Spleen (tissue), 13 donors: ENCODE measurements at regions of chr3 and their contacts with region 1.

Region 1: DNA sequence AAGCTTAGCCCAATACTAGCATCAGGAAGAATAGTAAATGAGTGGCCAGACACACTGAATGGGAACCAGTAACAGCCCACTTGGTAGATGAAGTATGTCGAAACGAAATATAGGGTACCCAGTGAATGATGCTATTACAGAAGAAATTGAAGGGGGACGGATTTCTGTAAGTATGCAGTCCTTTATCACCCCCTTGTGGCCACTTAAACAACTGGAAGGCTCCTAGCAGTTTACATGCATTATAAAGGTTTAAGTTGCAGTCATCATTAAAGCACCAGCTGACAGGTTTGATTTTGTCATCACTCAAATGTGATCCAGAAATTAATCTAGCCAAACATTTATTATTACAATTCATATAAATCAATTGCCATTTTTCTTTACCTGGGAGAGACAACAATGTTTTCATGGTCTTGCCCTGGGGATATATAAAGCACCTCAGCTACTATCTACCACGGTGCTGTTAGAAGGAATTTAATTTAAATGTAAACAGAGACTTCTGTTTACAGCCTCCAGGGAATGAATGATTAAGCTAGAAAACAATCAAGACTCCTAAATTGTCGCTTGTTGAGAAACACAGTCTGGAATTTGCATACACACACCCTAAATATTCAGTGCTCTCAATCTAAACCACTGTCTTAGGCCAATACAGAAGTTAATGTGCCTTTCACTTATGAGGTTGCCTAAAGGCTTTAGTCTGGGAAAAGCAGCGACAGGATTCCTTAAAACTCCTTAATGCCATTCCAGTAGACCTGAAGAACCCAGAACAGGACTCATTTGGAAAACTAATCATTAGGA is 7.8 kb downstream of the EIF1B start:
- DNase-seq: no peak
- H3K4me3 ChIP-seq: no peak overlapping the region
- H3K27ac ChIP-seq: no peak overlapping the region
- H3K4me1 ChIP-seq: peaks cover 8 to 31% (median 22%) of the 10 kb centered on the region in 6 donors
- H3K27me3 ChIP-seq: no peaks in the 10 kb centered on the region
- CTCF ChIP-seq: peak; percentile 66 to 90 (median 81)
- POLR2A ChIP-seq: no peak

Region 2: DNA sequence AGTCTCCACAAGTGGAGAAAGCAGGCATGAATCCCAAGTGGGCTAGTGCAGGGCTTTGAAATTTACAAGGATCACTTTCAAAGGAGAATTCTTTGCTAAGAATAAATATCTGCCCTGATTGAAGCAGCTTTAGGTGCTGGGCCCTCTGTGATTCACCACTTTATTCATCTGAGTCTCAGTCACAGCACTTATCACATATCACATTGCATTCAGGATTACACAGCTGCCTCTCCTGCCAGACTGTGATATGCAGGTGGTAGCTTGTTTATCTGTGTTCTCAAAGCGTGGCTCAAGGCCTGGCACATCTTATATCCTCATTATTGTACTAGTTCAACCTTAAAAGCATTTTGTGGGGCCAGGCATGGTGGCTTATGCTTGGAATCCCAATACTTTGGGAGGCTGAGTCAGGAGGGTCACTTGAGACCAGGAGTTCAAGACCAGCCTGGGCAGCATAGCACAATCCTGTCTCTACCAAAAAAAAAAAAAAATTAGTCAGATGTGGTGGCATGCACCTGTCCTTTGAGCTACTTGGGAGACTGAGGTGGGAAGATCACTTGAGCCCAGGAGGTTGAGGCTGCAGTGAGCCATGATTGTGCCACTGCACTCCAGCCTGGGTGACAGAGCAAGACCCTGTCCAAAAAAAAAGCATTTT is 164.7 kb before region 1 on chr3:
- intact Hi-C with region 1: no loop called
- DNase-seq: no peak
- H3K4me3 ChIP-seq: no peak overlapping the region
- H3K27ac ChIP-seq: no peak overlapping the region
- H3K4me1 ChIP-seq: no peaks in the 10 kb centered on the region
- H3K27me3 ChIP-seq: no peaks in the 10 kb centered on the region
- CTCF ChIP-seq: no peak
- POLR2A ChIP-seq: no peak

Region 3: GRCh38 chr3:40191850-40192448 is 125.3 kb before region 1 on chr3:
- intact Hi-C with region 1: loop called (anchors 5 kb)
- DNase-seq: peak; percentile 80
- H3K4me3 ChIP-seq: no peak overlapping the region
- H3K27ac ChIP-seq: no peak overlapping the region
- H3K4me1 ChIP-seq: no peaks in the 10 kb centered on the region
- H3K27me3 ChIP-seq: no peaks in the 10 kb centered on the region
- CTCF ChIP-seq: peak; percentile 82 to 95 (median 88)
- POLR2A ChIP-seq: no peak

Region 4: DNA sequence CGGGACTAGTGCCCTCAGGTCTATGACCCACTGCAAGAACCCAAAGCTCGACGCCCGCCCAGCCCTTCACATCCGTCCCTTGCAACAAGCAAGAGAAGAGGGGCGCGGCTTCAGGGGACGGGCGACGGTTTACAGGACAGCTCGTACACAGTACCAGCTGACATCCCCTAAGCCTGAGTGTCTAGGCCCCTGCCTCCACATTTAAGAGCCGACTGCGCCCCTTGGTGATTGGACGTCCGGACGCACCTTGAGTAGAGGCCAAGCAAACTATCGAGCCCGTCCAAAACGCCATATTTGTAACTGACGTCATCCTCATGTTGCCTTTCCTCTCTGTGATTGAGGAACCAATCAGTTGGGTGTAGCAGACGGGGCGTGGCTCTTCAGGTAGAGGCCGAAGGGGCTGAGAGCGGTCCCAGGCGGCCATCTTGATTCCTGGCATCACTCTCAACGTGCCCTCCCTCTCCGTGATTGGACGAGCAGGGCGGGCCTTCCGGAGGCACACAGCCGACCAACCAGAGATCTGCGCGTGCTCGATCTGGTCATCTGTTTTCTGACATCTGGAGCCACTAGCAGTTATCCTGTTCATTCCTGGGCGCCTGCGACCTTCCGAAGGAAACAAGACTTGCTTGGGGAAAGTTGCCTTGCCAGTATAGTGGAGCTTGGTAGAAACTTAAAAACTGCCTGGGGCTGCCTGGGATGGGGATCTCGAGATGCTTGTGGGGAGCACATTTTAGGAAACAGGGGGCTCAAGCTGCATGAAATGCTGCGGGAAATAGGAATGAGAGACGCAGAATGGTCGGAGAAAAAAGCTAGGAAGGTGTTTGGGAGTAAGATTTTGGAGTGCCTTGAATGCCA is 135.8 kb after region 1 on chr3:
- intact Hi-C with region 1: loop called (anchors 10 kb)
- DNase-seq: peak; percentile 100
- H3K4me3 ChIP-seq: peak overlapping the region; percentile 36 to 76 (median 58)
- H3K27ac ChIP-seq: peak overlapping the region; percentile 88 to 97 (median 96)
- H3K4me1 ChIP-seq: peaks cover 14 to 44% (median 30%) of the 10 kb centered on the region in 6 donors
- H3K27me3 ChIP-seq: no peaks in the 10 kb centered on the region
- CTCF ChIP-seq: no peak
- POLR2A ChIP-seq: peak in 1 of 3 donors; percentile 42